H1 (cell line): ENCODE measurements at regions of chr19 and their contacts with region 1.

Region 1: GRCh38 chr19:20077791-20078463 is at the start of gene ZNF90:
- DNase-seq: peak; percentile 84 to 96
- H3K4me3 ChIP-seq: peak within 1 kb of the TSS; percentile 89 to 99 (median 96)
- H3K27ac ChIP-seq: peak within 1 kb of the TSS; percentile 93
- H3K4me1 ChIP-seq: peaks cover 9 to 23% (median 18%) of the 10 kb centered on the region in 4 experiments; a peak in 6 of 7 replicates
- H3K27me3 ChIP-seq: no peaks in the 10 kb centered on the region
- CTCF ChIP-seq: peak in 1 of 3 experiments; percentile 6; a peak in 1 of 4 replicates
- EP300 ChIP-seq: no peak
- POLR2A ChIP-seq: peak; percentile 79 to 88
- RAD21 ChIP-seq: peak in 1 of 2 experiments; percentile 8; a peak in 1 of 4 replicates
- total RNA-seq, gene ZNF90: 105 and 114 TPM in 2 replicates

Region 2: GRCh38 chr19:19997656-19998268 is 80.2 kb before region 1 on chr19:
- CTCF ChIA-PET with region 1: interaction called, 17 read pairs
- POLR2A ChIA-PET with region 1: interaction called, 4 read pairs
- DNase-seq: peak; percentile 47 to 90
- H3K4me3 ChIP-seq: no peak overlapping the region
- H3K27ac ChIP-seq: no peak overlapping the region
- H3K4me1 ChIP-seq: no peaks in the 10 kb centered on the region
- H3K27me3 ChIP-seq: no peaks in the 10 kb centered on the region
- CTCF ChIP-seq: peak; percentile 72 to 94 (median 90)
- EP300 ChIP-seq: no peak
- POLR2A ChIP-seq: no peak
- RAD21 ChIP-seq: peak; percentile 87 to 88

Region 3: GRCh38 chr19:20103091-20103740 is 25.3 kb after region 1 on chr19:
- CTCF ChIA-PET with region 1: interaction called, 4 read pairs
- POLR2A ChIA-PET with region 1: interaction called, 134 read pairs
- DNase-seq: peak in 1 of 2 experiments; percentile 54
- H3K4me3 ChIP-seq: no peak overlapping the region; a peak in 1 of 8 replicates
- H3K27ac ChIP-seq: no peak overlapping the region
- H3K4me1 ChIP-seq: peaks cover 0 to 2% (median 0%) of the 10 kb centered on the region in 4 experiments; a peak in 2 of 7 replicates
- H3K27me3 ChIP-seq: no peaks in the 10 kb centered on the region
- CTCF ChIP-seq: no peak
- EP300 ChIP-seq: no peak
- POLR2A ChIP-seq: no peak
- RAD21 ChIP-seq: peak in 1 of 2 experiments; percentile 18; a peak in 1 of 4 replicates